ENCODE measurements at regions of chr11 and their contacts with region 1.

Region 1: DNA sequence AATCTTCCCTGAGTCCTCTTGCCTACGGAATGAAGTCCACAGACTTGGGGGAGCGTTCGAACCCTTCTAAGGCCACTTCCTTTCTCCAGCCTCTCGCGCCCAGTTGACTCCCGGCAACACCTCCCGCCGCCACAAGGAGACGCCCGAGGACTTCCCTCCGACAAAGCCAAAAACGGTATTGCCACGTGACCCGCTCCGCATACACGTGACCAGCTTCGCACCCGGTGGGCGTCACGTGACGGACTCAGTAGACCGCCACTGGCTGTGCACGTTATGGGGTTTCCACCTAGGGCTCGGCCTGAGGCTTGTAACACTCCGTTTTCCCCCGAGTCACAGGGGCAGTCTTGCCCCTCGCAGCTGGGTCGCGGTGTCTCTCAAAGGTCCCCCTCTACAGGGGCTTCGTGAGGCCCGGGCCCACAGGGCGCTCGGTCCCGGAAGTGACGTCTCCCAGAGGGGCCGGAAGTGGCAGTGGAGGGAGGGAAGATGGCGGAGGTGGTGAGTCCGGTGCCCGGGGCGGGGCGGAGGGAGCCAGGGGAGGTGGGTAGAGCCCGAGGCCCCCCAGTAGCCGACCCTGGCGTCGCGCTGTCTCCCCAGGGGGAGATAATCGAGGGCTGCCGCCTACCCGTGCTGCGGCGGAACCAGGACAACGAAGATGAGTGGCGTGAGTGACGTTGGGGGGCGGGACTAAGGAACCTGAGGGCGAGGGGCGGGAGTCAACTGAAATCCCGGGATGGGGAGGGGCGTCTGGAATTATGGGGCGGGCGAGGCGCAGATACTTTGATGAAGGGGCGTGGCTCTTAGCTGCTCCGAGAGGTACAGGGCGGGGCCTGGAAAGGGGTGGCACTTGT is at the start of gene KAT5:
- DNase-seq: peak; percentile 95 to 99 (median 96)
- ATAC-seq: peak; percentile 79
- H3K4me3 ChIP-seq: peak within 1 kb of the TSS; percentile 82
- H3K4me3 Mint-ChIP-seq: peak within 1 kb of the TSS; percentile 98
- H3K27ac ChIP-seq: peak within 1 kb of the TSS; percentile 99
- H3K27ac Mint-ChIP-seq: peak within 1 kb of the TSS; percentile 99
- H3K4me1 ChIP-seq: peaks cover 30% of the 10 kb centered on the region
- H3K4me1 Mint-ChIP-seq: peaks cover 23% of the 10 kb centered on the region
- H3K27me3 ChIP-seq: no peaks in the 10 kb centered on the region
- H3K27me3 Mint-ChIP-seq: no peaks in the 10 kb centered on the region
- CTCF ChIP-seq: peak; percentile 98
- total RNA-seq, gene KAT5: 90.9 to 99.6 TPM

Region 2: GRCh38 chr11:65615229-65615941 is 96.6 kb before region 1 on chr11 and contains the start of gene PCNX3:
- CTCF ChIA-PET with region 1: interaction called, 4 read pairs
- POLR2A ChIA-PET with region 1: interaction called, 7 read pairs
- intact Hi-C with region 1: loop called in 1 of 2 experiments (anchors 5 kb)
- DNase-seq: peak; percentile 99 to 100 (median 100)
- ATAC-seq: peak; percentile 87
- H3K4me3 ChIP-seq: peak within 1 kb of the TSS; percentile 93
- H3K4me3 Mint-ChIP-seq: peak within 1 kb of the TSS; percentile 98
- H3K27ac ChIP-seq: peak within 1 kb of the TSS; percentile 94
- H3K27ac Mint-ChIP-seq: peak within 1 kb of the TSS; percentile 93
- H3K4me1 ChIP-seq: peaks cover 67% of the 10 kb centered on the region
- H3K4me1 Mint-ChIP-seq: peaks cover 46% of the 10 kb centered on the region
- H3K27me3 ChIP-seq: no peaks in the 10 kb centered on the region
- H3K27me3 Mint-ChIP-seq: no peaks in the 10 kb centered on the region
- CTCF ChIP-seq: no peak
- total RNA-seq, gene PCNX3: 37.3 to 40.5 TPM

Region 3: GRCh38 chr11:65652511-65653231 is 59.3 kb before region 1 on chr11:
- CTCF ChIA-PET with region 1: no interaction called
- POLR2A ChIA-PET with region 1: interaction called, 21 read pairs
- intact Hi-C with region 1: no loop called
- DNase-seq: peak; percentile 92 to 99 (median 96)
- ATAC-seq: peak; percentile 75
- H3K4me3 ChIP-seq: peak overlapping the region; percentile 66
- H3K4me3 Mint-ChIP-seq: peak overlapping the region; percentile 88
- H3K27ac ChIP-seq: peak overlapping the region; percentile 95 to 99
- H3K27ac Mint-ChIP-seq: peak overlapping the region; percentile 97
- H3K4me1 ChIP-seq: peaks cover 60% of the 10 kb centered on the region
- H3K4me1 Mint-ChIP-seq: peaks cover 54% of the 10 kb centered on the region
- H3K27me3 ChIP-seq: no peaks in the 10 kb centered on the region
- H3K27me3 Mint-ChIP-seq: no peaks in the 10 kb centered on the region
- CTCF ChIP-seq: no peak

Region 4: DNA sequence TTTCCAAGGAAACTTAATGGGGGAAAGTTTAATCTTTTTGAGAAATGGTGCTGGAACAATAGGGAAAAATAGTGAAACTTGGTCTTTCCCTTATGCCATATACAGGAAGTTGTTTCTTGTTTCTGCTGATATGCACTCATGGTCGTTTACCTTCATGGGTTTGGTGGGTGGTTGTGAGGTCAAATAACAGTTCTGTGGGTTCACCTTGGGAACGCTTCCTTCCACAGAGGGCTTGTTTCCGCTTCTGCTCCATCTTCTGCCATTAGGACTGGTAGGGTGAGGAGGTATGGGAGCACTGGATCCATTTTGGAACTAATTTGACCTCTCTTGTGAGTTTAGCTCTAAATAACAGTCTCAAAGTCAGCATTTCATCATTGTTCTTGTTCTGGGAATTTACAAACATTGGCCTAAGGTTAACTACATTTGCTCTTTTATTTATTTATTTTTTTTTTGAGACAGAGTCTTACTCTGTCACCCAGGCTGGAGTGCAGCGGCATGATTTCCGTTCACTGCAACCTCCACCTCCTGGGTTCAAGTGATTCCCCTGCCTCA is 31.7 kb before region 1 on chr11:
- CTCF ChIA-PET with region 1: no interaction called
- POLR2A ChIA-PET with region 1: no interaction called
- intact Hi-C with region 1: no loop called
- DNase-seq: no peak
- ATAC-seq: no peak
- H3K4me3 ChIP-seq: no peak overlapping the region
- H3K4me3 Mint-ChIP-seq: no peak overlapping the region
- H3K27ac ChIP-seq: no peak overlapping the region
- H3K27ac Mint-ChIP-seq: no peak overlapping the region
- H3K4me1 ChIP-seq: no peaks in the 10 kb centered on the region
- H3K4me1 Mint-ChIP-seq: no peaks in the 10 kb centered on the region
- H3K27me3 ChIP-seq: no peaks in the 10 kb centered on the region
- H3K27me3 Mint-ChIP-seq: peaks cover 5% of the 10 kb centered on the region
- CTCF ChIP-seq: no peak

Region 5: DNA sequence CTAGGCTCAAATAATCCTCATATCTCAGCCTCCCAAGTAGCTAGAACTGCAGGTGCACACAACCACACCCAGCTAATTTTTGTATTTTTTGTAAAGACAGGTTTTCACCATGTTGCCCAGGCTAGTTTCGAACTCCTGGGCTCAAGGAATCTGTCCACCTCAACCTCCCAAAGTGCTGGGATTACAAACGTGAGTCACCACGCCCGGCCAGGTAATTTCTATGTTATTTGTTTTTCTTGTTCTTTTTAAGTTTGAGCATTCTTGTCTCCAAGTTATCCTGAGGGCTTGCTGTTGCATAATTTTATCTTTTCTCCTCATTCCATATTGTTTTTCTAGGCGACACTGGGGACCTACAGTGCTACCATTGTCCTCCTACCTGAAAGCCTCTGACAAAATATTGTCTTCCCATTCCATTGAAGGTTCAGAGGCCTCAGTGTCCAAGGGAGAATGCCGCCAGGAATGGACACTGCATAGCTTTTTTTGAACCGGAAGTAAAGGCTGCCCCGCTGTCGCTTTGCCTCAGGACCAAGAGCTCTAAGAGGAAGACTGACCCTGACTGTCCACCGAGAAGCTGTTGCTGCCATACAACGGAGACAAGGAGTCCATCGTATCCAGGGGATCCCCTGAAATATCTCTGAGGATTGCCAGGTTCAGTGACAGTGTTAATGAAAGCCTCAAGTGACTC is 59.0 kb after region 1 on chr11:
- CTCF ChIA-PET with region 1: interaction called, 10 read pairs
- POLR2A ChIA-PET with region 1: interaction called, 8 read pairs
- intact Hi-C with region 1: loop called (anchors 1 to 2 kb)
- DNase-seq: no peak
- ATAC-seq: no peak
- H3K4me3 ChIP-seq: no peak overlapping the region
- H3K4me3 Mint-ChIP-seq: no peak overlapping the region
- H3K27ac ChIP-seq: no peak overlapping the region
- H3K27ac Mint-ChIP-seq: no peak overlapping the region
- H3K4me1 ChIP-seq: no peaks in the 10 kb centered on the region
- H3K4me1 Mint-ChIP-seq: peaks cover 5% of the 10 kb centered on the region
- H3K27me3 ChIP-seq: no peaks in the 10 kb centered on the region
- H3K27me3 Mint-ChIP-seq: no peaks in the 10 kb centered on the region
- CTCF ChIP-seq: no peak

Region 6: GRCh38 chr11:65817835-65818742 is 106.1 kb after region 1 on chr11:
- CTCF ChIA-PET with region 1: interaction called, 29 read pairs
- POLR2A ChIA-PET with region 1: interaction called, 18 read pairs
- intact Hi-C with region 1: loop called (anchors 1 kb)
- DNase-seq: peak; percentile 84 to 98 (median 94)
- ATAC-seq: peak; percentile 89
- H3K4me3 ChIP-seq: peak overlapping the region; percentile 50
- H3K4me3 Mint-ChIP-seq: peak overlapping the region; percentile 81
- H3K27ac ChIP-seq: peak overlapping the region in 1 of 2 donors; percentile 35
- H3K27ac Mint-ChIP-seq: peak overlapping the region; percentile 67
- H3K4me1 ChIP-seq: peaks cover 16% of the 10 kb centered on the region
- H3K4me1 Mint-ChIP-seq: peaks cover 11% of the 10 kb centered on the region
- H3K27me3 ChIP-seq: no peaks in the 10 kb centered on the region
- H3K27me3 Mint-ChIP-seq: no peaks in the 10 kb centered on the region
- CTCF ChIP-seq: peak; percentile 99

Region 7: GRCh38 chr11:65988791-65989592 is 277.0 kb after region 1 on chr11:
- CTCF ChIA-PET with region 1: interaction called, 6 read pairs
- POLR2A ChIA-PET with region 1: interaction called, 3 read pairs
- intact Hi-C with region 1: loop called (anchors 1 to 2 kb)
- DNase-seq: peak; percentile 82 to 96 (median 89)
- ATAC-seq: peak; percentile 98
- H3K4me3 ChIP-seq: no peak overlapping the region
- H3K4me3 Mint-ChIP-seq: no peak overlapping the region
- H3K27ac ChIP-seq: no peak overlapping the region
- H3K27ac Mint-ChIP-seq: peak overlapping the region; percentile 61
- H3K4me1 ChIP-seq: peaks cover 10% of the 10 kb centered on the region
- H3K4me1 Mint-ChIP-seq: peaks cover 6% of the 10 kb centered on the region
- H3K27me3 ChIP-seq: no peaks in the 10 kb centered on the region
- H3K27me3 Mint-ChIP-seq: no peaks in the 10 kb centered on the region
- CTCF ChIP-seq: peak; percentile 96

Region 8: DNA sequence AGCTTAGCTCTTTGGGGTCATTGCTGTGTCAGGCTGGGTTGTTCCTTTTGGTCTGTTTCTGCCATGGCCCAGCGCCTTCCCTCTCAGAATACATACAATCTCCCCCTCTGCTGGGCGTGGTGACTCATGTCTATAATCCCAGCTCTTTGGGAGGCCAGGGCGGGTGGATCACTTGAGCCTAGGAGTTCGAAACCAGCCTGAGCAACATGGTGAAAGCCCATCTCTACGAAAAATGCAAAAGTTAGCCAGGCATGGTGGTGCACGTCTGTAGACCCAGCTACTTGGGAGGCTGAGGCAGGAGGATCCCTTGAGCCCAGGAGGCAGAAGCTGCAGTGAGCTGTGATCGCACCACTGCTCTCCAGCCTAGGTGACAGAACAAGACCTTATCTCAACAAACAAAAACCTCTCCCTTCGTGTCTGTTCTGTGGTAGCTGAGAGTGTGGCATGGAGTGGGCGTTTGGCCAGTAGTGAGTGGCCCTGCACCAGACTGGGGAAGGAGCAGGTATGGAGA is 509.8 kb after region 1 on chr11:
- CTCF ChIA-PET with region 1: no interaction called
- POLR2A ChIA-PET with region 1: no interaction called
- intact Hi-C with region 1: no loop called
- DNase-seq: no peak
- ATAC-seq: no peak
- H3K4me3 ChIP-seq: no peak overlapping the region
- H3K4me3 Mint-ChIP-seq: no peak overlapping the region
- H3K27ac ChIP-seq: peak overlapping the region; percentile 80 to 94
- H3K27ac Mint-ChIP-seq: peak overlapping the region; percentile 90
- H3K4me1 ChIP-seq: peaks cover 15% of the 10 kb centered on the region
- H3K4me1 Mint-ChIP-seq: peaks cover 7% of the 10 kb centered on the region
- H3K27me3 ChIP-seq: no peaks in the 10 kb centered on the region
- H3K27me3 Mint-ChIP-seq: no peaks in the 10 kb centered on the region
- CTCF ChIP-seq: no peak

Region 9: DNA sequence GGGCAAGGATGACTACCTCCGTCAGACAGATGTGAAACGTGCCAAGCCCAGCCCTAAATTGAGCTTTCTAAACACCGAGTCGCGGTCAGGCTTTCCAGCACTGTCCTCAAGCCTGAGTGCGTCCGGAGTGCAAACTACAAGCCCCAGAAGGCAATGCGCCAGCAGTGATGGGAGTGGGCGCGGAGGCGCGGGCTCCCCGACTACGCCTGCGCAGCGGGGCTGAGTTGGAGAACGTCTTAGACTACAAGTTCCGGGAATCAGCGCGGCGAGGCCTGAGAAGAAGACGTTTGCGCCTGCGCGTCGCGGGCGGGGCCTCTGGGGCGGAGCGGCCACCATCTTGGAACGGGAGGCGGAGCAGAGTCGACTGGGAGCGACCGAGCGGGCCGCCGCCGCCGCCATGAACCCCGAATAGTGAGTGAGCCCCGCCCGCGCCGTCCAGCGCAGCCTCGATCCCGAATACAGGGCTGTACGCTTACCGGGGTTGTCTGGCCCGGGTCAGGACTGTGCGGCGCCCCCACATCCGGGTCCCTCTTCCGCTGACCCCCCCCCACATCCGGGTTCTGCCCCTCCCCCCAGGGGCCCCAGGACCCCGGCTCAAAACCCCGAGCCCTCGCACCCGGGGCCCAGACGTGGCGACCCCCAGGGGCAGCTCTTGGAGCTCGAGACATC is 556.4 kb after region 1 on chr11 and contains the start of gene RAB1B:
- CTCF ChIA-PET with region 1: interaction called, 3 read pairs
- POLR2A ChIA-PET with region 1: interaction called, 6 read pairs
- intact Hi-C with region 1: loop called in 1 of 2 experiments (anchors 10 kb)
- DNase-seq: peak; percentile 99 to 100 (median 100)
- ATAC-seq: peak; percentile 82
- H3K4me3 ChIP-seq: peak within 1 kb of the TSS; percentile 99
- H3K4me3 Mint-ChIP-seq: peak within 1 kb of the TSS; percentile 96
- H3K27ac ChIP-seq: peak within 1 kb of the TSS; percentile 83 to 87
- H3K27ac Mint-ChIP-seq: peak within 1 kb of the TSS; percentile 100
- H3K4me1 ChIP-seq: peaks cover 58% of the 10 kb centered on the region
- H3K4me1 Mint-ChIP-seq: peaks cover 45% of the 10 kb centered on the region
- H3K27me3 ChIP-seq: no peaks in the 10 kb centered on the region
- H3K27me3 Mint-ChIP-seq: no peaks in the 10 kb centered on the region
- CTCF ChIP-seq: no peak
- total RNA-seq, gene RAB1B: 27.4 to 29.4 TPM